CD14-positive monocyte (primary cell): ENCODE measurements at regions of chr10 and their contacts with region 1.

Region 1: GRCh38 chr10:73848821-73849489 is 25.4 kb downstream of the CAMK2G start:
- DNase-seq: peak; percentile 91 to 95 (median 92)
- H3K4me3 ChIP-seq: no peak overlapping the region
- H3K4me3 Mint-ChIP-seq: peak overlapping the region in 1 of 2 donors; percentile 61
- H3K27ac ChIP-seq: peak overlapping the region in 1 of 2 donors; percentile 49
- H3K27ac Mint-ChIP-seq: peak overlapping the region; percentile 77 to 95 (median 88)
- H3K4me1 ChIP-seq: peaks cover 13 to 19% of the 10 kb centered on the region in 2 donors
- H3K4me1 Mint-ChIP-seq: peaks cover 20% of the 10 kb centered on the region
- H3K27me3 ChIP-seq: no peaks in the 10 kb centered on the region
- H3K27me3 Mint-ChIP-seq: no peaks in the 10 kb centered on the region
- CTCF ChIP-seq: peak; percentile 98

Region 2: GRCh38 chr10:73467206-73467605 is 381.7 kb before region 1 on chr10:
- intact Hi-C with region 1: no loop called
- DNase-seq: no peak
- H3K4me3 ChIP-seq: no peak overlapping the region
- H3K4me3 Mint-ChIP-seq: no peak overlapping the region
- H3K27ac ChIP-seq: no peak overlapping the region
- H3K27ac Mint-ChIP-seq: no peak overlapping the region
- H3K4me1 ChIP-seq: no peaks in the 10 kb centered on the region
- H3K4me1 Mint-ChIP-seq: peaks cover 2% of the 10 kb centered on the region
- H3K27me3 ChIP-seq: no peaks in the 10 kb centered on the region
- H3K27me3 Mint-ChIP-seq: peaks cover 0 to 1% (median 0%) of the 10 kb centered on the region in 3 donors
- CTCF ChIP-seq: no peak

Region 3: GRCh38 chr10:73879296-73880173 is 30.6 kb after region 1 on chr10:
- intact Hi-C with region 1: loop called (anchors 1 to 2 kb)
- DNase-seq: peak; percentile 91 to 97 (median 97)
- H3K4me3 ChIP-seq: no peak overlapping the region
- H3K4me3 Mint-ChIP-seq: no peak overlapping the region
- H3K27ac ChIP-seq: peak overlapping the region in 1 of 2 donors; percentile 64
- H3K27ac Mint-ChIP-seq: peak overlapping the region; percentile 55 to 90 (median 85)
- H3K4me1 ChIP-seq: peaks cover 19 to 26% of the 10 kb centered on the region in 2 donors
- H3K4me1 Mint-ChIP-seq: peaks cover 25% of the 10 kb centered on the region
- H3K27me3 ChIP-seq: no peaks in the 10 kb centered on the region
- H3K27me3 Mint-ChIP-seq: peaks cover 0 to 1% (median 0%) of the 10 kb centered on the region in 3 donors
- CTCF ChIP-seq: peak; percentile 86

Region 4: DNA sequence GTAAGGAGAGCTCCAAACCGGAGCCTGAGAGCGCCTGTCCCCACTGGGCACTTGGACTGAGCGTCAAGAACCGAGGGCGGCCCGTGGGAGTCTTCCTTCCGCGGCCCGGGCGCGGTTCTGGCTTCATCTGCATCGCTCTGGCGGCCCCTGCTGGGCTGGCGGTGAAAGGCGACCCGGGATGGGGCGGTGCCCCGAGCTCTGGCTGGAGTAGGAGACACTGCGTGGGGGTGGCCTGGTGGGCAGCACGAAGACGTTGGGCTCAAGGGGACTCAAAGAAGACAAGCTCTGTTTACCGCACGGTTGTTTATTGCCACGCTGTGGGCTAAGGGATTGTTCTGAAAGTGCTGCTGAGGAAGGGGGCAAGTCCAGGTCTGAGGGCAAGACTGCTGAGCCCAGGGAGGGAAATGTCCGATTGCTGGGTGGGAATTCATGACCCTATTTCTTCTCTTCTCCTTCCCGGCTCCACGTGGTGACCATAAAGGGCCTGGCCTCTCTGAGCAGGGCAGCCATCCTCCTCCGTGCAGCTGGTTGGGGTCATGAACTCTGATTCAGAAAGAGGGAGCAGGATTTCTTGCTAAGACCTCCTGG is 91.8 kb after region 1 on chr10:
- intact Hi-C with region 1: loop called (anchors 2 kb)
- DNase-seq: peak; percentile 73 to 79 (median 77)
- H3K4me3 ChIP-seq: peak overlapping the region in 1 of 3 experiments; percentile 55
- H3K4me3 Mint-ChIP-seq: peak overlapping the region; percentile 64 to 90
- H3K27ac ChIP-seq: no peak overlapping the region
- H3K27ac Mint-ChIP-seq: peak overlapping the region in 4 of 7 donors; percentile 62 to 90 (median 87)
- H3K4me1 ChIP-seq: peaks cover 8% of the 10 kb centered on the region in 2 donors
- H3K4me1 Mint-ChIP-seq: peaks cover 9% of the 10 kb centered on the region
- H3K27me3 ChIP-seq: no peaks in the 10 kb centered on the region
- H3K27me3 Mint-ChIP-seq: peaks cover 1 to 3% (median 2%) of the 10 kb centered on the region in 3 donors
- CTCF ChIP-seq: peak; percentile 95

Region 5: GRCh38 chr10:74081192-74081803 is 232.3 kb after region 1 on chr10:
- intact Hi-C with region 1: loop called in 1 of 2 experiments (anchors 10 kb)
- DNase-seq: peak; percentile 19 to 42 (median 32)
- H3K4me3 ChIP-seq: no peak overlapping the region
- H3K4me3 Mint-ChIP-seq: no peak overlapping the region
- H3K27ac ChIP-seq: no peak overlapping the region
- H3K27ac Mint-ChIP-seq: peak overlapping the region in 2 of 7 donors; percentile 28 to 80
- H3K4me1 ChIP-seq: no peaks in the 10 kb centered on the region
- H3K4me1 Mint-ChIP-seq: peaks cover 17% of the 10 kb centered on the region
- H3K27me3 ChIP-seq: no peaks in the 10 kb centered on the region
- H3K27me3 Mint-ChIP-seq: no peaks in the 10 kb centered on the region
- CTCF ChIP-seq: peak; percentile 67